ENCODE measurements at regions of chr9 and their contacts with region 1.

Region 1: GRCh38 chr9:119365291-119366027 is 3.8 kb downstream of the BRINP1 start:
- DNase-seq: peak; percentile 69
- H3K4me3 ChIP-seq: no peak overlapping the region; a peak in 1 of 4 replicates
- H3K27ac ChIP-seq: no peak overlapping the region
- H3K4me1 ChIP-seq: peaks cover 0 to 10% of the 10 kb centered on the region in 2 experiments; a peak in 1 of 4 replicates
- H3K27me3 ChIP-seq: peaks cover 9% of the 10 kb centered on the region; the same call in 1 of the 2 replicates
- CTCF ChIP-seq: peak; percentile 66
- EP300 ChIP-seq: no peak
- RAD21 ChIP-seq: peak; percentile 89

Region 2: GRCh38 chr9:118170032-118170955 is 1195.2 kb before region 1 on chr9:
- CTCF ChIA-PET with region 1: interaction called, 31 read pairs
- POLR2A ChIA-PET with region 1: no interaction called
- DNase-seq: peak; percentile 57
- H3K4me3 ChIP-seq: no peak overlapping the region
- H3K27ac ChIP-seq: no peak overlapping the region
- H3K4me1 ChIP-seq: no peaks in the 10 kb centered on the region; a peak in 1 of 4 replicates
- H3K27me3 ChIP-seq: no peaks in the 10 kb centered on the region
- CTCF ChIP-seq: peak; percentile 60
- EP300 ChIP-seq: no peak
- RAD21 ChIP-seq: peak; percentile 93

Region 3: GRCh38 chr9:118522093-118523028 is 843.1 kb before region 1 on chr9:
- CTCF ChIA-PET with region 1: interaction called, 13 read pairs
- POLR2A ChIA-PET with region 1: no interaction called
- DNase-seq: peak; percentile 48
- H3K4me3 ChIP-seq: no peak overlapping the region; a peak in 1 of 4 replicates
- H3K27ac ChIP-seq: no peak overlapping the region
- H3K4me1 ChIP-seq: no peaks in the 10 kb centered on the region
- H3K27me3 ChIP-seq: no peaks in the 10 kb centered on the region
- CTCF ChIP-seq: peak; percentile 51
- EP300 ChIP-seq: no peak
- RAD21 ChIP-seq: peak; percentile 85

Region 4: GRCh38 chr9:118529210-118529609 is 836.2 kb before region 1 on chr9:
- CTCF ChIA-PET with region 1: interaction called, 11 read pairs
- POLR2A ChIA-PET with region 1: no interaction called
- DNase-seq: no peak
- H3K4me3 ChIP-seq: no peak overlapping the region
- H3K27ac ChIP-seq: no peak overlapping the region
- H3K4me1 ChIP-seq: peaks cover 0 to 7% of the 10 kb centered on the region in 2 experiments; a peak in 2 of 4 replicates
- H3K27me3 ChIP-seq: no peaks in the 10 kb centered on the region
- CTCF ChIP-seq: no peak
- EP300 ChIP-seq: no peak
- RAD21 ChIP-seq: no peak

Region 5: GRCh38 chr9:118595719-118596305 is 769.6 kb before region 1 on chr9:
- CTCF ChIA-PET with region 1: interaction called, 47 read pairs
- POLR2A ChIA-PET with region 1: no interaction called
- DNase-seq: peak; percentile 28
- H3K4me3 ChIP-seq: no peak overlapping the region; a peak in 1 of 4 replicates
- H3K27ac ChIP-seq: no peak overlapping the region
- H3K4me1 ChIP-seq: no peaks in the 10 kb centered on the region
- H3K27me3 ChIP-seq: no peaks in the 10 kb centered on the region
- CTCF ChIP-seq: peak; percentile 28
- EP300 ChIP-seq: no peak
- RAD21 ChIP-seq: peak; percentile 87

Region 6: DNA sequence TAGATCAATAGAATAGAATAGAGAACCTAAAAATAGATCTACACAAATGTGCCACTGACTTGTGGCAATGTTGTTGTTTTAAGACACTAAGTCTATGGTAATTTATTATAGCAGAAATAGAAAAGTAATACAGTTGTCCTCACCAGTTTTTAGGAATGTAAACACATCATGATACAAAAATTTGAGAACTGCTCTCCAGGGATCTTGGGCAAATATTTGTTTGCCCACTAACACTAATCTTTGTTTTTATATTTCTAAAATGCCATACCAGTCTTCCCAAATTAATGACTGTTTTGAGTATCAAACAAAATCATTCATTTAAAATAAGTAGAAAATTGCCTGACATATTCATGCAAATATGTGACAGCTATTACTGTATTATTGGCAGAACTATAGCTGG is 293.8 kb before region 1 on chr9:
- CTCF ChIA-PET with region 1: no interaction called
- POLR2A ChIA-PET with region 1: no interaction called
- DNase-seq: no peak
- H3K4me3 ChIP-seq: no peak overlapping the region
- H3K27ac ChIP-seq: no peak overlapping the region
- H3K4me1 ChIP-seq: no peaks in the 10 kb centered on the region
- H3K27me3 ChIP-seq: no peaks in the 10 kb centered on the region
- CTCF ChIP-seq: no peak
- EP300 ChIP-seq: no peak
- RAD21 ChIP-seq: no peak

Region 7: GRCh38 chr9:119234636-119235035 is 130.8 kb before region 1 on chr9:
- CTCF ChIA-PET with region 1: no interaction called
- POLR2A ChIA-PET with region 1: no interaction called
- DNase-seq: no peak
- H3K4me3 ChIP-seq: no peak overlapping the region
- H3K27ac ChIP-seq: no peak overlapping the region
- H3K4me1 ChIP-seq: no peaks in the 10 kb centered on the region
- H3K27me3 ChIP-seq: no peaks in the 10 kb centered on the region
- CTCF ChIP-seq: no peak
- EP300 ChIP-seq: no peak
- RAD21 ChIP-seq: no peak

Region 8: DNA sequence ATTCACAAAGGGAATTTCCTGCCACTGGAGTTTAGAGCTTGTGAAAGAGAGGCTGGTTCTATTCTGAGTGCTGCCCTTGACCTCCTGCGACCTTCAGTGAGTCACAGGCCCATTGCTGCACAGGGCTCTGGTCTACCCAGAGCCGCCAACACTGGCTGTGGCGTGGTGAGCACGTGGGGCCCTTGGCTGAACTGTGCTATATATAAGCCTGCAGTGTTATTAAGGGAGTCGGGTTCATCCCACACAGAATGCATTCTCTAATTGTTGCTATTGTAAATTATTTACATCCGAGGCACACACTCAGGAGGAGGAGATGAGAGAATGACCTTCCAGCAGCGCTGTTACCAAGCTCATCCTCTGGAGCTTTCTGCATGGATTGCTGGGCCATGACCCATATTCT is 43.3 kb before region 1 on chr9:
- CTCF ChIA-PET with region 1: no interaction called
- POLR2A ChIA-PET with region 1: no interaction called
- DNase-seq: no peak
- H3K4me3 ChIP-seq: no peak overlapping the region
- H3K27ac ChIP-seq: no peak overlapping the region
- H3K4me1 ChIP-seq: no peaks in the 10 kb centered on the region
- H3K27me3 ChIP-seq: no peaks in the 10 kb centered on the region
- CTCF ChIP-seq: no peak
- EP300 ChIP-seq: no peak
- RAD21 ChIP-seq: no peak

Measured in SK-N-SH (cell line).